GM12878 (cell line): ENCODE measurements at regions of chr6 and their contacts with region 1.

Region 1: DNA sequence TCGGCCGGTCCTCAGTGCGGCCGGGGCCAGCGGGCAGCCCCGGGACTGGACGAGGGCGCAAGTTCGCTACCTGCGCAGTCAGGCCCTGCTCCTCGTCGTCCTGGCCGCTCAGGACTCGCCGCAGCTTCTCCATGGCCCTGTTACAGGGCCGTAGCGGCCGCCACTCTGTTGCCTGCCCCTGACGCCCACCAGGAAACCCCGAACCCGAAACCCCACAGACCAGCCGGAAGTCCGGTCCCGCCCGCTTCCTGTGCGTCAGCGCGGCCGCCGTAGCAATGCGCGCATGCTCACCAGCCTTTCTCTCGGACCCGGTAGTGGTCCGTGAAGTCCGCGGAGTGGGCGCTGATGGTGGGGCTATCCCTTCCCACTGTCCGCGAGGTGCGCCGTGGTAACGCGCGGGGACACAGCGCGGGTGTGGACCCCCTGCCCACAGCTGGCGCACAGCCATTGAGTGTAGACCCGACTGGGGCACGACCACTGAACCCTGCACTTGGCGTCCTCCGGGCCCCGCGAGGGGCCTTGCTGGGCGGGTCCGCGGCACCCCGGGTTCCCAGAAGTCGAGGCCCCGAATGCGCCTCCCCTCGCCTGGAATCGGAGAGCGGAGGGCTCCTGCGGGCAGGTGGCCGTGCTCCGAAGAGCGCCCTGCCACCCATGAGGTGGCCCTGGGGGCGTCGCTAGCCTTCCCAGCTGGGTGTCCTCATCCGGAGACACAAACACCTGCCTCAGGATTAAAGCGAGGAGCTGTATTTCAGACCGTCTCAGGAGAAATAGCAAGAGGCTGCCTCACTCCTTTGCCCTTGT is at the start of gene SFT2D1:
- DNase-seq: peak; percentile 66
- ATAC-seq: peak; percentile 84
- H3K4me3 ChIP-seq: peak within 1 kb of the TSS; percentile 96
- H3K27ac ChIP-seq: peak within 1 kb of the TSS; percentile 99
- H3K4me1 ChIP-seq: peaks cover 3% of the 10 kb centered on the region; the same call in 1 of the 2 replicates
- H3K27me3 ChIP-seq: no peaks in the 10 kb centered on the region
- CTCF ChIP-seq: no peak
- EP300 ChIP-seq: peak; percentile 64 to 68; a peak in 2 of 4 replicates
- POLR2A ChIP-seq: peak; percentile 99
- RAD21 ChIP-seq: no peak
- polyA plus RNA-seq, gene SFT2D1: 119 to 149 TPM

Region 2: DNA sequence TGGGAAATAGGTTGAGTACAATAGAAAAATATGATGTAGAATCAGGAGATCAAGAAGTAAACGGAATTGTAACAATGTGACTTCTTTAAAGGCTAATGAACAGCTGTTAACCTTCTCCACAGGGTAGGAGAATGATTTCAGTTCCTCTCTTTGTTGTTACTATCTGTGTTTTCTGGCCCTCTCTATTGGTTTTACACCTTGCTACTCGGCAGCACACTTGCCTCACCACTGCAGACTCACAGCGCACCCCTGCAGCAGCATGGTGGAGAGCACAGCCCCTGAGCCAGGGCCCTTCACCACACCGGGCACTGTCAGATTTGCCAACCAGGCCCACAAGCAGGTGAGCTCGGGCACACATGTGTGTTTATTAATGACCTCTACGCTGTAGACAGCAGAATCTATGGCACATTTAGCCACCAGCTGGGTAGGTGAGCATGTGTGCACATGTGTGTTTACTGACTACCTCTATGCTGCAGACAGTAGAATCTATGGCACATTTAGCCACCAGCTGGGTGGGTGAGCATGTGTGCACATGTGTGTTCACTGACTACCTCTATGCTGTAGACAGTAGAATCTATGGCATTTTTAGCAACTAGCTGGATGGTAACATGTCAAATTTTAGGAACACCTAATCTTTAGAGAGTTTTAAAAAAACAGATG is 17.0 kb before region 1 on chr6:
- CTCF ChIA-PET with region 1: interaction called, 10 read pairs
- POLR2A ChIA-PET with region 1: interaction called, 19 read pairs
- RAD21 ChIA-PET with region 1: interaction called, 43 read pairs
- SMC1A ChIA-PET with region 1: interaction called, 41 read pairs
- in situ Hi-C with region 1: no loop called
- intact Hi-C with region 1: no loop called
- DNase-seq: peak; percentile 43
- ATAC-seq: peak; percentile 96
- H3K4me3 ChIP-seq: no peak overlapping the region
- H3K27ac ChIP-seq: peak overlapping the region; percentile 4; the same call in 1 of the 2 replicates
- H3K4me1 ChIP-seq: peaks cover 11% of the 10 kb centered on the region
- H3K27me3 ChIP-seq: no peaks in the 10 kb centered on the region
- CTCF ChIP-seq: no peak; a peak in 1 of 6 replicates
- EP300 ChIP-seq: peak; percentile 60 to 84; a peak in 3 of 4 replicates
- POLR2A ChIP-seq: no peak
- RAD21 ChIP-seq: no peak

Region 3: GRCh38 chr6:166586424-166587156 is 244.0 kb after region 1 on chr6 and contains the start of gene RAMACL:
- CTCF ChIA-PET with region 1: no interaction called
- POLR2A ChIA-PET with region 1: no interaction called
- RAD21 ChIA-PET with region 1: no interaction called
- SMC1A ChIA-PET with region 1: no interaction called
- in situ Hi-C with region 1: no loop called
- intact Hi-C with region 1: no loop called
- DNase-seq: peak; percentile 52
- ATAC-seq: peak; percentile 86
- H3K4me3 ChIP-seq: no peak within 1 kb of the TSS; the same call in 1 of the 2 replicates
- H3K27ac ChIP-seq: peak within 1 kb of the TSS; percentile 73
- H3K4me1 ChIP-seq: peaks cover 32% of the 10 kb centered on the region
- H3K27me3 ChIP-seq: no peaks in the 10 kb centered on the region
- CTCF ChIP-seq: no peak
- EP300 ChIP-seq: no peak
- POLR2A ChIP-seq: no peak
- RAD21 ChIP-seq: no peak
- polyA plus RNA-seq, gene RAMACL: 1.3 TPM

Region 4: DNA sequence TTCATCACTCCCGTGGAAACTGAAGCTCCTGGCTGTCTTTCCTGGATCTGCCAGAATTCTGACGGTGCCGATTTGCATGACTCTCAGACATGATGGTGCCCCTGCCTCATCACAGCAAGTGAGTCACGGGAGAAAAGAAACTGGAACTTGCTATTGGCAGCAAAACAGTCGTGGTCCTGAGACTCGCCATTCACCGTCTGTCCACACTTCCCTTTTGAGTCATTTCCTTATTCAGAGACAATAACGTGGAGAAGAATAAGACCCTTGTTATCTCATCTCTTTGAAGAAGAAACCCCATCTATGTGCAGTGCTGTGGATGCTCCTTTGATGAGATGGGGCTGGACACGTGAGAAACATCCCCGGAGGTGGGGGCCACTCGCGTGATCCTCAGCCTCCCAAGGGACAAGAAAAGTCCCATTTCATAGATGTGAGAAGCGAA is 811.0 kb after region 1 on chr6:
- CTCF ChIA-PET with region 1: no interaction called
- POLR2A ChIA-PET with region 1: no interaction called
- RAD21 ChIA-PET with region 1: no interaction called
- SMC1A ChIA-PET with region 1: no interaction called
- in situ Hi-C with region 1: no loop called
- intact Hi-C with region 1: loop called (anchors 10 kb)
- DNase-seq: peak; percentile 78
- ATAC-seq: peak; percentile 71
- H3K4me3 ChIP-seq: peak overlapping the region; percentile 54
- H3K27ac ChIP-seq: peak overlapping the region; percentile 70
- H3K4me1 ChIP-seq: peaks cover 30% of the 10 kb centered on the region
- H3K27me3 ChIP-seq: no peaks in the 10 kb centered on the region; a peak in 1 of 4 replicates
- CTCF ChIP-seq: no peak
- EP300 ChIP-seq: peak; percentile 81; a peak in 3 of 4 replicates
- POLR2A ChIP-seq: no peak
- RAD21 ChIP-seq: no peak